ENCODE measurements at regions of chr2 and their contacts with region 1.

Region 1: GRCh38 chr2:218671654-218672566 is at the starts of genes RNF25 and STK36:
- DNase-seq: peak; percentile 69 to 90
- ATAC-seq: peak; percentile 93 to 96 (median 93)
- H3K4me3 ChIP-seq: peak within 1 kb of the TSS; percentile 75
- H3K4me3 Mint-ChIP-seq: peak within 1 kb of the TSS; percentile 92
- H3K27ac ChIP-seq: peak within 1 kb of the TSS; percentile 37
- H3K27ac Mint-ChIP-seq: peak within 1 kb of the TSS; percentile 91 to 92
- H3K4me1 ChIP-seq: peaks cover 17% of the 10 kb centered on the region
- H3K4me1 Mint-ChIP-seq: peaks cover 16 to 22% of the 10 kb centered on the region in 2 donors
- H3K27me3 ChIP-seq: no peaks in the 10 kb centered on the region
- H3K27me3 Mint-ChIP-seq: no peaks in the 10 kb centered on the region
- CTCF ChIP-seq: no peak
- total RNA-seq, gene RNF25: 16.5 to 22.8 (median 20.1) TPM
- total RNA-seq, gene STK36: 20.0 to 20.3 (median 20.2) TPM

Region 2: GRCh38 chr2:218631837-218632236 is 40.1 kb before region 1 on chr2:
- intact Hi-C with region 1: no loop called
- DNase-seq: no peak
- ATAC-seq: no peak
- H3K4me3 ChIP-seq: no peak overlapping the region
- H3K4me3 Mint-ChIP-seq: no peak overlapping the region
- H3K27ac ChIP-seq: no peak overlapping the region
- H3K27ac Mint-ChIP-seq: no peak overlapping the region
- H3K4me1 ChIP-seq: no peaks in the 10 kb centered on the region
- H3K4me1 Mint-ChIP-seq: no peaks in the 10 kb centered on the region
- H3K27me3 ChIP-seq: no peaks in the 10 kb centered on the region
- H3K27me3 Mint-ChIP-seq: no peaks in the 10 kb centered on the region
- CTCF ChIP-seq: no peak

Region 3: GRCh38 chr2:218710687-218711549 is 39.0 kb after region 1 on chr2 and contains the start of gene TTLL4:
- intact Hi-C with region 1: loop called (anchors 1 kb)
- DNase-seq: peak; percentile 98 to 99
- ATAC-seq: peak; percentile 98 to 100 (median 98)
- H3K4me3 ChIP-seq: peak within 1 kb of the TSS; percentile 76
- H3K4me3 Mint-ChIP-seq: peak within 1 kb of the TSS; percentile 99
- H3K27ac ChIP-seq: peak within 1 kb of the TSS; percentile 78
- H3K27ac Mint-ChIP-seq: peak within 1 kb of the TSS; percentile 94 to 97
- H3K4me1 ChIP-seq: peaks cover 10% of the 10 kb centered on the region
- H3K4me1 Mint-ChIP-seq: peaks cover 12 to 27% of the 10 kb centered on the region in 2 donors
- H3K27me3 ChIP-seq: no peaks in the 10 kb centered on the region
- H3K27me3 Mint-ChIP-seq: no peaks in the 10 kb centered on the region
- CTCF ChIP-seq: peak; percentile 89
- total RNA-seq, gene TTLL4: 20.2 to 25.5 (median 22.8) TPM

Region 4: GRCh38 chr2:218745559-218746469 is 73.9 kb after region 1 on chr2:
- intact Hi-C with region 1: no loop called
- DNase-seq: no peak
- ATAC-seq: no peak
- H3K4me3 ChIP-seq: no peak overlapping the region
- H3K4me3 Mint-ChIP-seq: no peak overlapping the region
- H3K27ac ChIP-seq: no peak overlapping the region
- H3K27ac Mint-ChIP-seq: peak overlapping the region in 1 of 2 donors; percentile 73
- H3K4me1 ChIP-seq: peaks cover 5% of the 10 kb centered on the region
- H3K4me1 Mint-ChIP-seq: peaks cover 0 to 6% of the 10 kb centered on the region in 2 donors
- H3K27me3 ChIP-seq: no peaks in the 10 kb centered on the region
- H3K27me3 Mint-ChIP-seq: no peaks in the 10 kb centered on the region
- CTCF ChIP-seq: no peak

Region 5: GRCh38 chr2:218811382-218811781 is 139.5 kb after region 1 on chr2:
- intact Hi-C with region 1: no loop called
- DNase-seq: no peak
- ATAC-seq: no peak
- H3K4me3 ChIP-seq: no peak overlapping the region
- H3K4me3 Mint-ChIP-seq: no peak overlapping the region
- H3K27ac ChIP-seq: no peak overlapping the region
- H3K27ac Mint-ChIP-seq: no peak overlapping the region
- H3K4me1 ChIP-seq: no peaks in the 10 kb centered on the region
- H3K4me1 Mint-ChIP-seq: no peaks in the 10 kb centered on the region
- H3K27me3 ChIP-seq: no peaks in the 10 kb centered on the region
- H3K27me3 Mint-ChIP-seq: peaks cover 11 to 29% of the 10 kb centered on the region in 2 donors
- CTCF ChIP-seq: no peak

Measured in natural killer cell (primary cell).